Prostate gland (tissue), 2 donors: ENCODE measurements at regions of chr15 and their contacts with region 1.

Region 1: GRCh38 chr15:89740137-89740536 is 10.9 kb downstream of the MESP1 start:
- DNase-seq: peak; percentile 75
- H3K4me3 ChIP-seq: no peak overlapping the region
- H3K27ac ChIP-seq: peak overlapping the region; percentile 15 to 57
- H3K4me1 ChIP-seq: no peaks in the 10 kb centered on the region
- H3K27me3 ChIP-seq: no peaks in the 10 kb centered on the region
- CTCF ChIP-seq: peak; percentile 84 to 93 (median 90)
- POLR2A ChIP-seq: no peak

Region 2: DNA sequence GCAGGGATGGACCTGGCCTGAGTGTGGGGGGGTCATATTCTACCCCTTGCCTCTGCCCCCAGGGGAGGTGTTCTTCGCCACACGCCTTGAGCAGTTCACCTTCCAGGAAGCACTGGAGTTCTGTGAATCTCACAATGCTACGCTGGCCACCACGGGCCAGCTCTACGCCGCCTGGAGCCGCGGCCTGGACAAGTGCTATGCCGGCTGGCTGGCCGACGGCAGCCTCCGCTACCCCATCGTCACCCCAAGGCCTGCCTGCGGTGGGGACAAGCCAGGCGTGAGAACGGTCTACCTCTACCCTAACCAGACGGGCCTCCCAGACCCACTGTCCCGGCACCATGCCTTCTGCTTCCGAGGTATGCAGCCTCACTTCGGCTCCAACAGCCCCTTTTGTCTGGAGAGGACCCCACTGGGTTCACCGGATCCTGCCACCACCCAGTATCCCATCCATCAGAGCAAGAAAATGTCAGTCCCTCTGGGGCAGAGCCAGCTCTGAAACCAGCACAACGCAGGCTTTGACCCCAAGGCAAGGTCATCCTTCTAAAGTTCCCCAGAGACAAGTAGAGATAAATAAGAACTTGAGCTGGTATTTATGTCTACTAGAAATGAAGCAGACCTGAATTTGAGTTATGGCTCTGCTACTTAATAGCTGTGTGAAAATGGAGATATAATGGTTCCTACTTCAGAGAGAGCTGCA is 890.6 kb before region 1 on chr15:
- intact Hi-C with region 1: no loop called
- DNase-seq: no peak
- H3K4me3 ChIP-seq: no peak overlapping the region
- H3K27ac ChIP-seq: no peak overlapping the region
- H3K4me1 ChIP-seq: no peaks in the 10 kb centered on the region
- H3K27me3 ChIP-seq: no peaks in the 10 kb centered on the region
- CTCF ChIP-seq: no peak
- POLR2A ChIP-seq: no peak

Region 3: GRCh38 chr15:89630974-89631901 is 108.9 kb before region 1 on chr15:
- intact Hi-C with region 1: no loop called
- DNase-seq: no peak
- H3K4me3 ChIP-seq: no peak overlapping the region
- H3K27ac ChIP-seq: no peak overlapping the region
- H3K4me1 ChIP-seq: no peaks in the 10 kb centered on the region
- H3K27me3 ChIP-seq: no peaks in the 10 kb centered on the region
- CTCF ChIP-seq: no peak
- POLR2A ChIP-seq: no peak

Region 4: DNA sequence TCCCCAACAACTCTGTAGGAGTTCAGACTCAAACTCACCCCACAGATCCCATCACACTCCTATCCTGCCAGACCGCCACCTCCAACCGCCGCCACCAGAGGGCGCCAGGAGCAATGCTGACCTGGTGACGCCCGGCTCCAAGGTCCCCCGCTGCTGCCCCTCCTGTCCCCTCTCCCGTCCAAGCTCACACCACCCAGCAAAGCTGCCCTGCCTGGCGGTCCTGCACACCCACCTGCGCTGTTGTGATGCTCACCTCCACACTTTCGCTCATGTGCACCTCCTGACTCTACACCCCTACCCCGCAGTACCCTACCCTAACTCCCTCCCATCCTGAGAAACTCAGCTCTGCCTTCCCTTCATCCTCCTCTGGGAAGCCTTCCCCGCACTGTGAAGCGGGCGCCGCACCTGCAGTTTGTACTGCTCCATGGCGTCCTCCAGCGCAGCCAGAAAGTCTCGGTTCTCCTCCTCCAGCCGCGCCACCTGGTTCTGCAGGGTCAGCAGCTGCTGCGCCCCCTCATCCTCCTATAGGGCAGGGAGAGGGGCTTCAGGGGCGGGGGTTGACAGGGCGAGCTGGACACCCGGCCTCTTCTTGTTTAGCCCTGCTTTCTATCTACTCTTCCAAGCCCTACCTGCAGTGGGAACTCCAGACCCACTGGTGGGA is 92.8 kb before region 1 on chr15:
- intact Hi-C with region 1: loop called (anchors 10 kb)
- DNase-seq: peak; percentile 68
- H3K4me3 ChIP-seq: no peak overlapping the region
- H3K27ac ChIP-seq: no peak overlapping the region
- H3K4me1 ChIP-seq: no peaks in the 10 kb centered on the region
- H3K27me3 ChIP-seq: no peaks in the 10 kb centered on the region
- CTCF ChIP-seq: peak; percentile 60 to 81 (median 72)
- POLR2A ChIP-seq: no peak

Region 5: DNA sequence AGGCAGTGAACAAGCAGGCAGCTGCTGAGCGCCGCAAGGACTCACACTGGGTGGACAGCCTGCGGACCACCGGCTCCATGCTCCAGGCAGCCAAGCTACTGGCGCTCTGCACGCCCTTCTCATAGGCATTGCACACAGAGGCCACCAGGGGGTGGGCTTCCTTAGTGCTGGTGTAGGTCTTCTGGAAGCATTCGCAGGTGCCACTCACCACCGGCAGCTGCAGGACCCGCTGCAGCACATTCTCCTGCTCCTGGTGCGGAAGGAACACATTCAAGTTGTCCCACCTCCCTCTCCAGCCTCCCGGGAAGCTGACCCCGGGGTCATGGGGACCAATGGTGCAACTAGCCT is 67.0 kb before region 1 on chr15:
- intact Hi-C with region 1: no loop called
- DNase-seq: no peak
- H3K4me3 ChIP-seq: no peak overlapping the region
- H3K27ac ChIP-seq: no peak overlapping the region
- H3K4me1 ChIP-seq: no peaks in the 10 kb centered on the region
- H3K27me3 ChIP-seq: no peaks in the 10 kb centered on the region
- CTCF ChIP-seq: no peak
- POLR2A ChIP-seq: no peak

Region 6: GRCh38 chr15:89806559-89807550 is 66.7 kb after region 1 on chr15:
- intact Hi-C with region 1: no loop called
- DNase-seq: no peak
- H3K4me3 ChIP-seq: no peak overlapping the region
- H3K27ac ChIP-seq: peak overlapping the region in 1 of 2 donors; percentile 90
- H3K4me1 ChIP-seq: peaks cover 14% of the 10 kb centered on the region
- H3K27me3 ChIP-seq: no peaks in the 10 kb centered on the region
- CTCF ChIP-seq: no peak
- POLR2A ChIP-seq: no peak